Esophagus squamous epithelium (tissue), 5 donors: ENCODE measurements at regions of chr22 and their contacts with region 1.

Region 1: GRCh38 chr22:33579448-33580093 is 340.7 kb downstream of the LARGE1 start:
- DNase-seq: no peak
- H3K4me3 ChIP-seq: no peak overlapping the region
- H3K27ac ChIP-seq: no peak overlapping the region
- H3K4me1 ChIP-seq: peaks cover 0 to 16% (median 0%) of the 10 kb centered on the region in 3 donors
- H3K27me3 ChIP-seq: peaks cover 0 to 4% (median 0%) of the 10 kb centered on the region in 4 donors
- CTCF ChIP-seq: peak; percentile 73 to 93 (median 80)
- POLR2A ChIP-seq: no peak

Region 2: DNA sequence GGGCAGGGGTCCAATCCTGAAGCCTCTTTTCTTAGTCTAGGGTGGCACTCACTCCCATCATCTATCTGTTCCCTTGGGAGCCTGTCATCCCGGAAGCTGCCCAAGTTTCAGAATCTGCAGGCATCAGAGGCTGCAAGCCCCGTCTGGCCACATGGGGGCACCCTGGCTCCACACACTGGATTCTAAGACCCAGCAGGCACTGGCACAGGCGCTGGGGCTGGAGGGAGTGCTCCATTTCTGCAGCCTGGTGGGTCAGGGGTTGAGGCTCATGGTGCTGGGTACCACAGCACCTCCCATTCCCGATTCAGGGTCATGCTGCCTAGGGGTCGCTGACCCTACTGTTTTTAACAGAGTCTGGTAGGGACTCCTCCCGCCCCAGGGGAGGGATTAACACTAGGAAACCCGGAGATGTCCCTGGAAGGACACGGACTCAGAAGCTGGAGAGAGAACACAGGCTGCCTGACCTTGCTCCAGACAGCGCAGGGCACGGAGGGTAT is 277.5 kb before region 1 on chr22:
- intact Hi-C with region 1: loop called (anchors 5 kb)
- DNase-seq: peak; percentile 8
- H3K4me3 ChIP-seq: peak overlapping the region in 1 of 4 donors; percentile 4
- H3K27ac ChIP-seq: no peak overlapping the region
- H3K4me1 ChIP-seq: peaks cover 0 to 25% (median 4%) of the 10 kb centered on the region in 3 donors
- H3K27me3 ChIP-seq: no peaks in the 10 kb centered on the region
- CTCF ChIP-seq: peak; percentile 76 to 92 (median 89)
- POLR2A ChIP-seq: no peak

Region 3: DNA sequence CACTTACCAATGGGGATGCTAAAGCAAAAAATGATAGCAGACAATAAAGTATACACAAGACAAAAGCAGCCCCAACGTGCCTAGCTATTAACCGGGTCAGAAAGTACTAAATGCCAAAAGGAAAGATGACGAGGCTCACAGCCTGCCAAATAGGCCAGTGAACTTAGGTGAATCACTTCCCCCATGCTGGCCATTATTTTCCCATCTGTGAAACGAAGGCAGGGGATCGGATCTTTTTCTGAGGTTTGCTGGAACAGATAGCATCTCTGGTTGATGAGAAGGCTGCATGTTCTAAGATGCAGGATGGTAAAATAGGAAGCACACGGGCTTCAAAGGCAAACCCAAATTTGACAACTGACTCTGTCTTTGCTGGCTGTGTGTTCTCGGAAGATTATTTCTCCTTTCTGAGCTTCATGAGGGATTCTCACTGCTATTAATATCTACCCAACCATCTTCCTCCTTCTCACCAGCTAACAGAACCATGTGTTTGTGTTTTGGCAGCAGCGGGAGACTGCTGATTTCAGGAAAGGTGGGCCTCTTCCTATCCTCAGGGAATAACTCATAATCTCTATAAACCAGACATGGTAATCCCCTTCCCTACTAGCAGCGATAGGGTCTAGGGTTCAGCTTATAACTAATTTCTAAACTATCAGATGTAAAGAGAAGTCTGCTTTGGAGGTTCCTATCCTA is 50.0 kb before region 1 on chr22:
- intact Hi-C with region 1: loop called (anchors 10 kb)
- DNase-seq: no peak
- H3K4me3 ChIP-seq: no peak overlapping the region
- H3K27ac ChIP-seq: peak overlapping the region in 2 of 4 donors; percentile 38
- H3K4me1 ChIP-seq: no peaks in the 10 kb centered on the region
- H3K27me3 ChIP-seq: no peaks in the 10 kb centered on the region
- CTCF ChIP-seq: no peak
- POLR2A ChIP-seq: no peak